B cell (primary cell): ENCODE measurements at regions of chr15 and their contacts with region 1.

Region 1: DNA sequence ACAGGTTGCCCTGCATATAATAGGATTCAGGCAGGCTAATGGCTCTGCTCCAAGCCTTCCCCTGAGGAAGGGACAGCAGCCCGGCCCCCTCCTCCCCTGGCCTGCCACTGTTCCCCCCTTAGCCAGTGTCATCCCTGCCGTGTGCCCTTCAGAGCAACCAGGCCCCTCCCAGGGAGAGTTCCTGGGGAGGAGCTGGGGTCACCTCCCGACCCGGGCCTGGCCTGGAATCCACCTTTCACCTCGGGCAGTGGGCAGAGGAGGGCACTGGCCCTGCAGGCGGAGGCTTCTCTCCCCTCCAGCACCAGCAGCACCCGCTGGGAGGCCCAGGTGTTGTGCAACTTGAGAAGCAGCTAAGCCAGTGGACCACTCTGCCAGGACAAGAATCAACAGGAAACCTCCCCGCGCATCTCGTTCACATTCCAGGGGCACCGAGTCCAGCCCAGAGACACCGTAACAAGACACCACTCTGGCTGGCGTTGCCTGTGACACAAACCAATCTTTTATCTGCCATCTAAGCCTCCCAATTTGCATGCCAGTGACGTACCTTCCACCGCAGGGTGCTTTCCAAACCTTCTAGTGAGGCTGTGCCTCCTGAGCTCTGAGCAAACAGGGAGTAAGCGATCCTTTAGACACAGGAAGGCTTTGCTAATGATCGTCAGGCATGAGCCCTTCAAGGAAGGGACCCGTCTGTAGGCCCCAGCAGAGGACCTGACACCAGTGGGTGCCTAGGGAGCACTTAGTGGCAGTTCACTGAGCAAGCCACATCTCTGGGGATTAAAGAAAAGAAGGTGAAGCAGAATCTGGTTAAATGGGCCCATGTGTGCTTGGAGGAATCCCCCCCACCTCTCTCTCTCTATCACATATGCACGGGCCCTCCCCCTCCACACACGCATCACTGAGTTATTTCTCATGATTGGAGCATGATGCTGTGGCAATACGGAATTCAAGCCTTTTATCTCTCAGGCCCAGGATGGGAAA is 98.9 kb upstream of the TLE3 start:
- DNase-seq: peak; percentile 86
- ATAC-seq: peak; percentile 85
- H3K4me3 ChIP-seq: no peak overlapping the region
- H3K4me3 Mint-ChIP-seq: peak overlapping the region; percentile 72
- H3K27ac ChIP-seq: no peak overlapping the region
- H3K27ac Mint-ChIP-seq: peak overlapping the region; percentile 89
- H3K4me1 ChIP-seq: peaks cover 33 to 57% of the 10 kb centered on the region in 2 donors
- H3K4me1 Mint-ChIP-seq: peaks cover 51% of the 10 kb centered on the region
- H3K27me3 ChIP-seq: peaks cover 0 to 16% (median 6%) of the 10 kb centered on the region in 4 experiments
- H3K27me3 Mint-ChIP-seq: peaks cover 26% of the 10 kb centered on the region
- CTCF ChIP-seq: no peak

Region 2: GRCh38 chr15:69760890-69761568 is 435.6 kb before region 1 on chr15:
- CTCF ChIA-PET with region 1: interaction called, 3 read pairs
- POLR2A ChIA-PET with region 1: no interaction called
- intact Hi-C with region 1: loop called (anchors 2 kb)
- DNase-seq: peak; percentile 63
- ATAC-seq: peak; percentile 80
- H3K4me3 ChIP-seq: no peak overlapping the region
- H3K4me3 Mint-ChIP-seq: peak overlapping the region; percentile 76
- H3K27ac ChIP-seq: no peak overlapping the region
- H3K27ac Mint-ChIP-seq: peak overlapping the region; percentile 81
- H3K4me1 ChIP-seq: peaks cover 65 to 68% of the 10 kb centered on the region in 2 donors
- H3K4me1 Mint-ChIP-seq: peaks cover 69% of the 10 kb centered on the region
- H3K27me3 ChIP-seq: no peaks in the 10 kb centered on the region
- H3K27me3 Mint-ChIP-seq: peaks cover 3% of the 10 kb centered on the region
- CTCF ChIP-seq: no peak

Region 3: GRCh38 chr15:70172566-70173290 is 23.9 kb before region 1 on chr15:
- CTCF ChIA-PET with region 1: no interaction called
- POLR2A ChIA-PET with region 1: no interaction called
- intact Hi-C with region 1: no loop called
- DNase-seq: no peak
- ATAC-seq: no peak
- H3K4me3 ChIP-seq: no peak overlapping the region
- H3K4me3 Mint-ChIP-seq: no peak overlapping the region
- H3K27ac ChIP-seq: no peak overlapping the region
- H3K27ac Mint-ChIP-seq: no peak overlapping the region
- H3K4me1 ChIP-seq: no peaks in the 10 kb centered on the region
- H3K4me1 Mint-ChIP-seq: no peaks in the 10 kb centered on the region
- H3K27me3 ChIP-seq: peaks cover 0 to 4% (median 0%) of the 10 kb centered on the region in 4 experiments
- H3K27me3 Mint-ChIP-seq: no peaks in the 10 kb centered on the region
- CTCF ChIP-seq: no peak

Region 4: DNA sequence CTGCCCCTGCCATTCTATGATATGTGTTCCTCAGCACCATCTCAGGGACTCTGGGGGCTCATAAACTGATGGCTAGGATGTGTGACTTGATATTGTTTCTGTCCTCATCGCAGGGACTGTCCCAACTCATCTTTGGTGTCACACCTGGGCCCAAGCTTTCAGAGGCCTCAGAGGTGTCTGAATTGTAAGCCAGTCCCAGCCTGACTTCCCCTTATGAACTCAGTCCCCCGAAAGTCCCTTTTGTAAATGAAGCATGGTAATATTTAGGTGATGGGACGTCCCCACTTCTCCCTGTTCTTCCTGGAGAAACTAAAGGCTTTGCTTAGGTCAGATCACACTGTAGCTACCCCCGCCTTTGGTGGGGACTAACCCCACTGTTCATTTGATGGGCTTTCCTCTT is 43.5 kb after region 1 on chr15:
- CTCF ChIA-PET with region 1: no interaction called
- POLR2A ChIA-PET with region 1: interaction called, 5 read pairs
- intact Hi-C with region 1: loop called (anchors 5 kb)
- DNase-seq: peak; percentile 90
- ATAC-seq: peak; percentile 93
- H3K4me3 ChIP-seq: no peak overlapping the region
- H3K4me3 Mint-ChIP-seq: peak overlapping the region; percentile 6
- H3K27ac ChIP-seq: peak overlapping the region; percentile 43 to 54
- H3K27ac Mint-ChIP-seq: peak overlapping the region; percentile 23
- H3K4me1 ChIP-seq: peaks cover 40 to 60% of the 10 kb centered on the region in 2 donors
- H3K4me1 Mint-ChIP-seq: peaks cover 46% of the 10 kb centered on the region
- H3K27me3 ChIP-seq: no peaks in the 10 kb centered on the region
- H3K27me3 Mint-ChIP-seq: no peaks in the 10 kb centered on the region
- CTCF ChIP-seq: no peak

Region 5: DNA sequence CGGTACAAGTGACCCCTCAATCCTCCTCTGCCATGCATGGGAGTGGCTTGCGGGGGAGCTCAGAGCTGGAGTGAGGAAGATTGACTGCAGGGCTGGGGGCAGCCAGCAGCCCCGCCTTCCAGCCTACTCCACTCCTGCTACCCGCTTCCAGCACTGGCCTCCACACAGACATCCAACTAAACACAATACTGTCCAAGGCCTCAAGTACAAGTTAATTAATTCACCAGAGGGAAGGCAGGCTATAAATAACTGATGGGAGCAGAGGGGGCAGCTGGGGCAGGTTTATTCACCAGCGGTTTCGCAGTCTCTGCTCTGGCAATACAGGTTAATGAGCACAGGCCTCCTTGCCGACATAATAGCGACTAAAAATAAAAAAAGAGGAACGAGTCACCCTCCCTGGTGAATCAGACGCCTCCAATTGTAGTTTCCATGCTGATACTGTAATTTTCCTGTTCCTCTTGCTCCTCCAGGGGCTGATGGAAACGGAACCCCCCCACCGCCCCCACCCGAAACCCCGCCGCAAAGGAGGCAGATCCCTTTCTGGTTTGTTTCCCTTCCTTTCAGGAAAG is 67.5 kb after region 1 on chr15:
- CTCF ChIA-PET with region 1: interaction called, 3 read pairs
- POLR2A ChIA-PET with region 1: interaction called, 3 read pairs
- intact Hi-C with region 1: loop called (anchors 5 kb)
- DNase-seq: peak; percentile 71
- ATAC-seq: peak; percentile 54
- H3K4me3 ChIP-seq: no peak overlapping the region
- H3K4me3 Mint-ChIP-seq: peak overlapping the region; percentile 55
- H3K27ac ChIP-seq: no peak overlapping the region
- H3K27ac Mint-ChIP-seq: peak overlapping the region; percentile 68
- H3K4me1 ChIP-seq: peaks cover 88 to 96% of the 10 kb centered on the region in 2 donors
- H3K4me1 Mint-ChIP-seq: peaks cover 95% of the 10 kb centered on the region
- H3K27me3 ChIP-seq: peaks cover 0 to 3% (median 0%) of the 10 kb centered on the region in 4 experiments
- H3K27me3 Mint-ChIP-seq: no peaks in the 10 kb centered on the region
- CTCF ChIP-seq: no peak

Region 6: DNA sequence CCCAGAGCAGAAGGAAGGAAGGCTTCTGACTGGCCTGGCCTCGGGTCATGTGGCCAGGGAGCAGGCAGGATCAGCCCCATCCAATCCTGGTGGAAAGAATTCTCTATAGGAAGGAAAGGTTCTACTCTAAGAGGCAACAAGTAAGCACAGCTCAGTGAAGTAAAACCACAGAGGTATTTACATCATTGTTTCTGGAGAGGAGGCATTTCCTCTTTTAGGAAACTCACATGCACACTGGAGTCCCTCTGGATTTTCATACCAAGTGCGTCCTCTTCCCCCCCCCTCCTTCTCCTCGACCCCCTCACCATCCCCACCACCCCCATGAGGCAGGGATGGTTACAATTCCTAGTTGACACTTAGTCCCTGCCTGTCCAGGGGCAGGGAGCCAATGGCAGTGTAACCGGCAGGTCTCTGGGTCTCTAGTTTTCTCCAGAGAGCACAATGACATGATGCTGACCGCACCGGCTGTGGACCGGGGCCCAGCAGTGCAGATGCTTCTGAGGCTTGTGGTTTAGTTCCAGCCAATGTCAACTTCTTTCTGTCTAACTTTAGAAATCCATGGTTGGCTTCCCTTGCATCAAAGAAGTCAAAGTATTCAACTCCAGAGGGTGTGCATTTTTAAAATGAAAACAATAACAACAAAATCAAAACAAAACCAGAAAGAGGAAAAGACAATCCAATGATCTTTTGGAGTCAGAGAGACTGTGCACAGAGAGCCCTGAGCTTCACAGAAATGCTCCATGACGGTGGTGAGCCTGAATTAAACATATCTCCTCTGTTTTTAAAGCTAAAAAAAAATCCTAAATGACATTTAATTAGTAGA is 131.5 kb after region 1 on chr15:
- CTCF ChIA-PET with region 1: no interaction called
- POLR2A ChIA-PET with region 1: no interaction called
- intact Hi-C with region 1: loop called (anchors 1 kb)
- DNase-seq: peak; percentile 77
- ATAC-seq: peak; percentile 90
- H3K4me3 ChIP-seq: no peak overlapping the region
- H3K4me3 Mint-ChIP-seq: peak overlapping the region; percentile 62
- H3K27ac ChIP-seq: peak overlapping the region; percentile 32 to 39
- H3K27ac Mint-ChIP-seq: peak overlapping the region; percentile 74
- H3K4me1 ChIP-seq: peaks cover 22 to 32% of the 10 kb centered on the region in 2 donors
- H3K4me1 Mint-ChIP-seq: peaks cover 33% of the 10 kb centered on the region
- H3K27me3 ChIP-seq: no peaks in the 10 kb centered on the region
- H3K27me3 Mint-ChIP-seq: no peaks in the 10 kb centered on the region
- CTCF ChIP-seq: no peak